H1 (cell line): ENCODE measurements at regions of chr6 and their contacts with region 1.

Region 1: GRCh38 chr6:133916650-133917151 is 27.8 kb downstream of the TCF21 start:
- DNase-seq: peak; percentile 96 to 99
- H3K4me3 ChIP-seq: peak overlapping the region in 3 of 4 experiments; percentile 4 to 46 (median 12); a peak in 4 of 8 replicates
- H3K27ac ChIP-seq: no peak overlapping the region; the same call in 1 of the 2 replicates
- H3K4me1 ChIP-seq: peaks cover 0 to 7% (median 3%) of the 10 kb centered on the region in 4 experiments; a peak in 6 of 7 replicates
- H3K27me3 ChIP-seq: no peaks in the 10 kb centered on the region
- CTCF ChIP-seq: peak; percentile 86 to 97 (median 87)
- EP300 ChIP-seq: no peak
- POLR2A ChIP-seq: no peak
- RAD21 ChIP-seq: peak; percentile 96 to 98

Region 2: GRCh38 chr6:133568970-133569889 is 347.5 kb before region 1 on chr6:
- CTCF ChIA-PET with region 1: interaction called, 62 read pairs
- POLR2A ChIA-PET with region 1: interaction called, 8 read pairs
- DNase-seq: no peak
- H3K4me3 ChIP-seq: peak overlapping the region; percentile 3 to 56 (median 24); a peak in 6 of 8 replicates
- H3K27ac ChIP-seq: no peak overlapping the region
- H3K4me1 ChIP-seq: no peaks in the 10 kb centered on the region
- H3K27me3 ChIP-seq: no peaks in the 10 kb centered on the region
- CTCF ChIP-seq: peak in 2 of 3 experiments; percentile 58 to 66; a peak in 2 of 4 replicates
- EP300 ChIP-seq: no peak
- POLR2A ChIP-seq: no peak
- RAD21 ChIP-seq: peak; percentile 76 to 78

Region 3: DNA sequence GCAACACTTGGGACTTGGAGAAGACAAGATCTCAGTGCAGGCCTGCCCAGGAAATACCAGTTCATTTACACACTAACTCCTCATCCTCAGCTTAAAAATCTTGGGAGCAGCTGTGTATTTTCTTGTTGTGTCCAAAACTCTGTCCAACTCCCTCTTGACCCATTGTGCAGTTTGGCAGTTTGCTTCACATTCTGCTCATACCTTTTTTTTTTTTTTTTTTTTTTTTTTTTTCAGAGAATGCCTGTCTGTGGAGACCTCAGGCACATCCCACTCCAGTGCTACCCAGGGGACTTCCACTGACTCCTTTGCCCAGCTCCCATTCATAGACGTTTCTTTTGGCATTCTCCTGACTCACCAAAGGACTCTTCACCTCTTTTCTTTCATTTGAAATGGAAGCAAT is 293.6 kb before region 1 on chr6:
- CTCF ChIA-PET with region 1: no interaction called
- POLR2A ChIA-PET with region 1: no interaction called
- DNase-seq: no peak
- H3K4me3 ChIP-seq: no peak overlapping the region
- H3K27ac ChIP-seq: no peak overlapping the region
- H3K4me1 ChIP-seq: no peaks in the 10 kb centered on the region
- H3K27me3 ChIP-seq: no peaks in the 10 kb centered on the region
- CTCF ChIP-seq: no peak
- EP300 ChIP-seq: no peak
- POLR2A ChIP-seq: no peak
- RAD21 ChIP-seq: no peak

Region 4: DNA sequence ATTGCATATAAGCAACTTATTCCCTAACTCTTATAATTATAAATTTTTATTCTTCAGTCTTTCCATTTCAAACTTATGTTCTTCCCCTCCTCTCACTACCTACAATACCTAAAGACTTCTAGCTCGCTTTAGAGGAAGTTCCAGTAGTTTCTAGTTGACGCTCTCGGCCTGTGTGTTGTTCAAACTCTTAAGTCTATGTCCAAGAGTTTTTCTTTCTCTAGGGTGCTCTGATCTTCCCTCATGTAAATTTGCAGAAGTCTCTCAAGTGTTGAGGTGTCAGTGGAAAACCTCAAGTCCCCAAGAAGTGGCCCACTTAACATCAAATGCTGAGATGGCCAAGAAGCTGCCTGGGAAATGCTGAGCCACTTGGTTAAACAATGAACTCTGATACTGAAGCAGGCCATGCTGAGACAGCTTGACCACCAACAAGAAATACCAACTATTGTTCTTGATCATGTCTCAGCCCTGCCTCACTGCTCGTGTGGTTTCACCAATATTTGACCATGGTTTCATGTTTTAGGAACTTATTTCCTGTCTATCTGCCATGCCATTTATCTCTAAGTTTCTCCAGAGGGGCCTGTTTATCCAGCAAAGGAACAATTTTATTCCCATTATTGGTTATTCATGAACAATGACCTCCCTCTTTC is 128.7 kb before region 1 on chr6:
- CTCF ChIA-PET with region 1: no interaction called
- POLR2A ChIA-PET with region 1: no interaction called
- DNase-seq: no peak
- H3K4me3 ChIP-seq: no peak overlapping the region
- H3K27ac ChIP-seq: no peak overlapping the region
- H3K4me1 ChIP-seq: no peaks in the 10 kb centered on the region
- H3K27me3 ChIP-seq: no peaks in the 10 kb centered on the region
- CTCF ChIP-seq: no peak
- EP300 ChIP-seq: no peak
- POLR2A ChIP-seq: no peak
- RAD21 ChIP-seq: no peak

Region 5: GRCh38 chr6:133837801-133838349 is 78.8 kb before region 1 on chr6:
- CTCF ChIA-PET with region 1: interaction called, 31 read pairs
- POLR2A ChIA-PET with region 1: interaction called, 4 read pairs
- DNase-seq: peak; percentile 87 to 93
- H3K4me3 ChIP-seq: peak overlapping the region; percentile 40 to 68 (median 50)
- H3K27ac ChIP-seq: peak overlapping the region; percentile 49; the same call in 1 of the 2 replicates
- H3K4me1 ChIP-seq: peaks cover 0 to 2% (median 0%) of the 10 kb centered on the region in 4 experiments; a peak in 2 of 7 replicates
- H3K27me3 ChIP-seq: no peaks in the 10 kb centered on the region
- CTCF ChIP-seq: peak; percentile 87 to 94 (median 91)
- EP300 ChIP-seq: no peak
- POLR2A ChIP-seq: peak in 1 of 2 experiments; percentile 51; a peak in 1 of 3 replicates
- RAD21 ChIP-seq: peak; percentile 68 to 79

Region 6: GRCh38 chr6:133891149-133891926 is 25.4 kb before region 1 on chr6:
- CTCF ChIA-PET with region 1: interaction called, 20 read pairs
- POLR2A ChIA-PET with region 1: no interaction called
- DNase-seq: peak in 1 of 2 experiments; percentile 72
- H3K4me3 ChIP-seq: peak overlapping the region; percentile 18 to 59 (median 36); a peak in 7 of 8 replicates
- H3K27ac ChIP-seq: no peak overlapping the region
- H3K4me1 ChIP-seq: peaks cover 3 to 20% (median 8%) of the 10 kb centered on the region in 4 experiments; a peak in 6 of 7 replicates
- H3K27me3 ChIP-seq: peaks cover 56 to 90% (median 78%) of the 10 kb centered on the region in 4 experiments
- CTCF ChIP-seq: no peak
- EP300 ChIP-seq: no peak
- POLR2A ChIP-seq: no peak
- RAD21 ChIP-seq: no peak